T-cell (primary cell): ENCODE measurements at regions of chr12 and their contacts with region 1.

Region 1: DNA sequence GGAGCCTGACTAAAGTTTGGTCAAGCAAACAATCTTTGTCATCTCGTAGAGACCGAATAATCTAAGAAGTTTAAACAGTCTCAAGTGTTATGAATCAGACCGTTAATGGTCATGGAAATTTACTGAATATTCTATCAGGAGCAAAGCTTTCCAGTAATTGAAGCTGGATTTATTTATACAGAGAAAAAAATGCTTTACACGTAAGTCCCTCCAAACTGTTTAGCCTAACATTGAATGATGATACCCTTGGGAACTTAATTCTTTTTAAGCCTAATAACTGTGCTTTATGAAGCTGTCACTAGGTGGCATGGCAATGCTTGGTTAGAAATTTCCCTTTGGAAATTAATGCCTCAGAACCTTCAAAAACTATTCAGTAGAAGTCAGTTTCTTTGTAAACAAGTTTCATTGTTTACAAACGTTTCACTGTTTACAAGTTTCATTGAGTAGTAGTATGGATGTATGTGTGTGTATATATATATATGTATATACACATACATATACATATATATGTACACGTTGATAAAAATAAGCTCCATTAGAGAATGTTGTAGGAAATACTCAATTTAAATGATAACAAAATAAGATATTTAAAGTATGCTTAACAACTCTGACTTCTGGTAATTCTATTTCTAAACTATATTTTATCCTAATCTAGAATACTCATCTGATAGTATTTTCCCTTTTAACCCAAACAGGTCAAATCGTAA is 32.1 kb downstream of the DEPDC4 start:
- DNase-seq: peak in 1 of 35 experiments; percentile 52
- ATAC-seq: peak in 3 of 4 experiments; percentile 36 to 45 (median 37)
- H3K4me3 ChIP-seq: no peak overlapping the region
- H3K4me3 Mint-ChIP-seq: no peak overlapping the region
- H3K27ac ChIP-seq: no peak overlapping the region
- H3K27ac Mint-ChIP-seq: no peak overlapping the region
- H3K4me1 ChIP-seq: no peaks in the 10 kb centered on the region
- H3K4me1 Mint-ChIP-seq: no peaks in the 10 kb centered on the region
- H3K27me3 ChIP-seq: no peaks in the 10 kb centered on the region
- H3K27me3 Mint-ChIP-seq: no peaks in the 10 kb centered on the region

Region 2: GRCh38 chr12:100404769-100405407 is 170.1 kb after region 1 on chr12:
- CTCF ChIA-PET with region 1: interaction called, 6 to 10 read pairs
- POLR2A ChIA-PET with region 1: no interaction called
- DNase-seq: peak in 8 of 35 experiments; percentile 0 to 28 (median 2)
- ATAC-seq: no peak
- H3K4me3 ChIP-seq: no peak overlapping the region
- H3K4me3 Mint-ChIP-seq: no peak overlapping the region
- H3K27ac ChIP-seq: no peak overlapping the region
- H3K27ac Mint-ChIP-seq: no peak overlapping the region
- H3K4me1 ChIP-seq: no peaks in the 10 kb centered on the region
- H3K4me1 Mint-ChIP-seq: no peaks in the 10 kb centered on the region
- H3K27me3 ChIP-seq: peaks cover 0 to 4% of the 10 kb centered on the region in 2 experiments
- H3K27me3 Mint-ChIP-seq: peaks cover 11 to 12% of the 10 kb centered on the region in 2 donors

Region 3: GRCh38 chr12:100554608-100555077 is 319.9 kb after region 1 on chr12:
- CTCF ChIA-PET with region 1: interaction called in 1 of 2 experiments, 13 read pairs
- POLR2A ChIA-PET with region 1: no interaction called
- DNase-seq: peak in 1 of 35 experiments; percentile 41
- ATAC-seq: no peak
- H3K4me3 ChIP-seq: no peak overlapping the region
- H3K4me3 Mint-ChIP-seq: no peak overlapping the region
- H3K27ac ChIP-seq: no peak overlapping the region
- H3K27ac Mint-ChIP-seq: no peak overlapping the region
- H3K4me1 ChIP-seq: no peaks in the 10 kb centered on the region
- H3K4me1 Mint-ChIP-seq: no peaks in the 10 kb centered on the region
- H3K27me3 ChIP-seq: peaks cover 0 to 6% of the 10 kb centered on the region in 2 experiments
- H3K27me3 Mint-ChIP-seq: peaks cover 4 to 8% of the 10 kb centered on the region in 2 donors